AG04449 (cell line): ENCODE measurements at regions of chr12 and their contacts with region 1.

Region 1: GRCh38 chr12:77010691-77011548 is 54.4 kb downstream of the E2F7 start:
- DNase-seq: peak; percentile 12
- H3K4me3 ChIP-seq: no peak overlapping the region
- CTCF ChIP-seq: peak; percentile 93

Region 2: DNA sequence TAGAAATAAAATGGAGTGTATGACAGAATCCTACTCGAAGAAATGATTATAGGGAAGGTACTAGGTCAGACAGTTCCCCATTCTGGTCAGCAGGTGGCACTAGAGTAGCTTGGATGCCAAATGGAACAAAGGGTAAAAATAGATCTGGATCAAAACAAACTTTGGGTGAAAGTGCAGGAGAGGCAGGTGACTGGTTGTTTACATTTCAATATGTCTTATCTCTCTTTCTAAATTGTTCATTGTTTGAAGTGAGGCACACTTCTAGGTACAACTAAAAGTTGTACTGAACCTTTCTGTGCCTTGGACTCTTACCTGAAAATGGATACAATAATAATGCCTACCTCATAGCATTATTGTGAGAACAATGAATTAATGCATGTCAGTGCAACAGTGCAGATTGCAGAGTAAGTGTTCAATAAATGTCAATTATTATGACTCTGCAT is 389.3 kb before region 1 on chr12:
- CTCF ChIA-PET with region 1: interaction called, 70 read pairs
- POLR2A ChIA-PET with region 1: no interaction called
- DNase-seq: no peak
- H3K4me3 ChIP-seq: no peak overlapping the region
- CTCF ChIP-seq: peak; percentile 75

Region 3: DNA sequence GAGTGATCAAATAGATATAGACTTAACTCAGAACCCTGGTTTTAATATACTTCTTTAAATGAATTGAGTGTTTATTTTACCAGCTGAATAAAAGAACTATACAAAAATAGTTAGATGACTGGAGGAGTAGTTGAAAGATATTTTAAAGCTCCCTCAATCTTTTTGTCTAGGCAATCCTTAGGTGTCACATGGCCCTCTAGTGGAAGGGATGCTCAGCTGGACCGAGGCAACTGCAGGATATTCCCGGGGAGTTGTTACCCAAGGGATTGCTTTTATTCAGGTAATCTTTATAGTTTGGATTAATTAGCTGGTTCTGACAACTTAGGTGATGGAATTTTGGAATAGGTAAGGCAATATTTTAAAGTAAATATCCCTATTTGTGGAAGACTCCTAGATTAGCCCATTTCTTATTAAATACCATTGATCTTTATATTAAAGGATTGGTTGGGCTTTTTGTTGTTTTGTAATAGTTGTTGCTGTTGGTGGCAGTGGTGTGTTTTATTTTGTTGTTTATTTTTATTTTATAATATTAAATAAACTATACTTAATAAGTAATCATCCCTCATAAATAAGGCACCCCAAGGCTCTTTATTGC is 189.9 kb before region 1 on chr12:
- CTCF ChIA-PET with region 1: interaction called, 29 read pairs
- POLR2A ChIA-PET with region 1: no interaction called
- DNase-seq: no peak
- H3K4me3 ChIP-seq: no peak overlapping the region
- CTCF ChIP-seq: peak; percentile 72

Region 4: GRCh38 chr12:76859611-76860010 is 151.3 kb before region 1 on chr12:
- CTCF ChIA-PET with region 1: interaction called, 18 read pairs
- POLR2A ChIA-PET with region 1: no interaction called
- DNase-seq: no peak
- H3K4me3 ChIP-seq: no peak overlapping the region
- CTCF ChIP-seq: no peak

Region 5: GRCh38 chr12:76878899-76879709 is 131.8 kb before region 1 on chr12 and contains the start of gene CSRP2:
- CTCF ChIA-PET with region 1: interaction called, 11 read pairs
- POLR2A ChIA-PET with region 1: interaction called, 4 read pairs
- DNase-seq: no peak
- H3K4me3 ChIP-seq: peak within 1 kb of the TSS; percentile 80
- CTCF ChIP-seq: peak; percentile 20

Region 6: DNA sequence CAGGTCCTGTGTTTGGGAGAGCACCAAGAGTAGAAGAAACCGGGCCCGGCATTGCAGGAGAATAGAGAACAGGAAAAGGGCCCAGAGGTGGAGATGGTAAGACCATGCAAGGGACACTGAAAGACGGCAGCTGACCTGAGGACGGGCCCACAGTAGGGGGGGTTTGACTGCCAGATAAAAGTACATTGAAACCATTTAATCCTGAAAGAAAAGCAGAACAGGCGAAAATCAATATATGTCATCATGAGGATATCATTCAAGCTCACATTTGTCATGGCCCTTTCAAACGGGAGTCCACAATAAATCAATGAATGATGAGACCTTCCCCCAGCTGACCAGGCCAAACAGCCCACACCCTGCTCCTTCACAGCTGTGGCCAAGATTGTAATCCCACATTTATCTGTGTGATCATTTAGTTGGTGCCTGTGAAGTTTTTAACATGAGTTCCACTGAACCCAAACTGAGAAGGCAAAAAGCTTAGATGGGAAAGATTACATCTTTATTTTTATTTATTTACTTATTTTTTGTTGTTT is 14.9 kb after region 1 on chr12:
- CTCF ChIA-PET with region 1: interaction called, 54 read pairs
- POLR2A ChIA-PET with region 1: no interaction called
- DNase-seq: no peak
- H3K4me3 ChIP-seq: no peak overlapping the region
- CTCF ChIP-seq: no peak